Activated naive CD4-positive, alpha-beta T cell treated with anti-CD3 and anti-CD28 coated beads, Interleukin-2, amount 10 ng/mL, durations not matched to agents 7 days and 5 days (primary cell): ENCODE measurements at regions of chr3 and their contacts with region 1.

Region 1: DNA sequence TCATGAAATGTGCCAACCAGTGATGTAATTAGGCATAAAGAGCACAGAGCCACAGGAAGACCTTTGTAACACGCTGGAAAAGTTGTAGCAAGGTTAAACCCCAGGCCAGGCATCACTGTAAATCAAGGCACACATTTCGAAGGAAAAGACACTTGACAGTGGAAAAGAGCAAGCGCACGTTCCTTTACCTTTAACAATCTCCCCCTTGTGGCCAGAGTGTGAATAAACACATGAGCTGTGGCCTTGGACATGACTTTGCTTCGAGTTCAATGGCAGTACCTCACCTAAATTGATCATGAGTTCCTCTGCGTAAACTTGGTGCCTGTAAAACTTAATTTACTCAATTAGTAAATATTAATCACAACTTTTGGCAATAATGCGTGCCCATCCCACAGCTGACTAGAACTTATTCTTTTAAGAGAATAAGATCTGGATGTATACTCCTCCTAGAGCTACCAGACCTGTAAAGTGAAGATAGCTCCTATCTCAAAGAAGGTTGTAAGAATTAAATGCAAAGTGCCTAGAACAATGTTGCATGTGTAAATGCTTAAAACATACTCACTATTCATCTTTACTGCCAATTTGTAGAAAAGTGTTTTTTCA is 757.0 kb upstream of the NECTIN3 start:
- DNase-seq: peak; percentile 62
- H3K4me3 Mint-ChIP-seq: no peak overlapping the region
- H3K27ac Mint-ChIP-seq: no peak overlapping the region
- H3K4me1 Mint-ChIP-seq: no peaks in the 10 kb centered on the region
- H3K27me3 Mint-ChIP-seq: no peaks in the 10 kb centered on the region

Region 2: GRCh38 chr3:109532257-109533216 is 782.1 kb before region 1 on chr3:
- CTCF ChIA-PET with region 1: interaction called, 16 read pairs
- DNase-seq: peak; percentile 55
- H3K4me3 Mint-ChIP-seq: no peak overlapping the region
- H3K27ac Mint-ChIP-seq: no peak overlapping the region
- H3K4me1 Mint-ChIP-seq: no peaks in the 10 kb centered on the region
- H3K27me3 Mint-ChIP-seq: peaks cover 3% of the 10 kb centered on the region

Region 3: GRCh38 chr3:110267304-110267845 is 47.2 kb before region 1 on chr3:
- CTCF ChIA-PET with region 1: no interaction called
- DNase-seq: no peak
- H3K4me3 Mint-ChIP-seq: no peak overlapping the region
- H3K27ac Mint-ChIP-seq: no peak overlapping the region
- H3K4me1 Mint-ChIP-seq: no peaks in the 10 kb centered on the region
- H3K27me3 Mint-ChIP-seq: no peaks in the 10 kb centered on the region

Region 4: DNA sequence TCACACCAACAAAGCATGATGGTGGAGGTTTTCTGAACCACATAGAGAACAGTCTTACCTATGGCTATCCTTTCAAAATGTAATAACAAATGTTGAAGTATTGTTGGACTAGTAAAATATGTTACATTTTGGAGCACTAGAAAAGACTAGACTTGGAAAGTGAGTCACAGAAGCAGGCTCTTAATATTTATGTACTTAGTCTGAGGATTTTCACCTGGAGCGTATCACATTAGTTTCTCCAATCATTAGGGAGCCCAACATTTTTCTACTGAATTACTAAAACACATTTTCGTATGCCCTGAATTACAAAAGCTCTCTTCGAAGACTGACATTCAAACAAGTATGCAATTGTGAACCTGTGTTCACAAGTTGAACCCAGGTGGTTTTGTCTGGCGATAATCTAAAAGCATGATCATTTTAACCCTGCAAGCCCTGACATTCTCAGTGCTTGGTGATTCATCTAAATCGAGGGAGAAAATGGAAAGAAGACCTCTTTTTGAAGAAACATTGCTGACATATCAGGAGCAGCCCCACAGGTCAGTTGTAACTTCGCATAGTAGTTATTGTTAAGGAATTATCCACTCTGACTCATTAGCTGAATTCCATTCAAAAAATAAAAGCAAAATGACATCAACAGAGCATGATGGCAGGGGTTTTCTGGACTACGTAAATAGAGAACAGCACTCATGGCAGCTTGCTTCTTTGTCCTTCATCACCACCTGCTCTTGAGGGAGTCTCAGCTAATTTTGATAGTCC is 77.2 kb after region 1 on chr3:
- CTCF ChIA-PET with region 1: no interaction called
- DNase-seq: no peak
- H3K4me3 Mint-ChIP-seq: no peak overlapping the region
- H3K27ac Mint-ChIP-seq: no peak overlapping the region
- H3K4me1 Mint-ChIP-seq: no peaks in the 10 kb centered on the region
- H3K27me3 Mint-ChIP-seq: no peaks in the 10 kb centered on the region

Region 5: DNA sequence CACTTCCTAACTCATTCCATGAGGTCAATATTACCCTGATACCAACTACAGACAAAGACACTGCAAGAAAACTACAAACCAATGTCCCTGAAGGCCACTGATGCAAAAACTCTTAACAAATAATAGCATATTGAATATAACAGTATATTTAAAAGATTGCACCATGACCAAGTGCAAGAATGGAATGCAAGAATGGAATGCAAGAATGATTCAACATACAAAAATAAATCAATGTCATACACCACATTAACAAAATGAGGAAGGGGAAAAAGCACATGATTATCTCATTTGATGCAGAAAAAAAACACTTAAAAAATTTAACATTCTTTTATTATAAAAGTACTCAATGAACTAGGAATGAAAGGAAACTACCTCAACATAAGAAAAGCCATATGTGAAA is 294.0 kb after region 1 on chr3:
- CTCF ChIA-PET with region 1: no interaction called
- DNase-seq: no peak
- H3K4me3 Mint-ChIP-seq: no peak overlapping the region
- H3K27ac Mint-ChIP-seq: no peak overlapping the region
- H3K4me1 Mint-ChIP-seq: no peaks in the 10 kb centered on the region
- H3K27me3 Mint-ChIP-seq: no peaks in the 10 kb centered on the region